ENCODE measurements at regions of chr11 and their contacts with region 1.

Region 1: GRCh38 chr11:95705485-95706124 is 84.0 kb downstream of the FAM76B start:
- DNase-seq: peak; percentile 65
- H3K4me3 ChIP-seq: no peak overlapping the region; a peak in 1 of 4 replicates
- H3K27ac ChIP-seq: no peak overlapping the region
- H3K4me1 ChIP-seq: peaks cover 0 to 7% of the 10 kb centered on the region in 2 experiments; a peak in 3 of 4 replicates
- H3K27me3 ChIP-seq: peaks cover 5% of the 10 kb centered on the region; the same call in 1 of the 2 replicates
- CTCF ChIP-seq: peak; percentile 94
- EP300 ChIP-seq: no peak
- RAD21 ChIP-seq: peak; percentile 99

Region 2: GRCh38 chr11:95067039-95067840 is 638.4 kb before region 1 on chr11:
- CTCF ChIA-PET with region 1: interaction called, 28 read pairs
- POLR2A ChIA-PET with region 1: no interaction called
- DNase-seq: peak; percentile 78
- H3K4me3 ChIP-seq: peak overlapping the region; percentile 90 to 98
- H3K27ac ChIP-seq: peak overlapping the region; percentile 79 to 96
- H3K4me1 ChIP-seq: peaks cover 7 to 8% of the 10 kb centered on the region in 2 experiments; a peak in 3 of 4 replicates
- H3K27me3 ChIP-seq: no peaks in the 10 kb centered on the region
- CTCF ChIP-seq: peak; percentile 50
- EP300 ChIP-seq: no peak
- RAD21 ChIP-seq: no peak

Region 3: DNA sequence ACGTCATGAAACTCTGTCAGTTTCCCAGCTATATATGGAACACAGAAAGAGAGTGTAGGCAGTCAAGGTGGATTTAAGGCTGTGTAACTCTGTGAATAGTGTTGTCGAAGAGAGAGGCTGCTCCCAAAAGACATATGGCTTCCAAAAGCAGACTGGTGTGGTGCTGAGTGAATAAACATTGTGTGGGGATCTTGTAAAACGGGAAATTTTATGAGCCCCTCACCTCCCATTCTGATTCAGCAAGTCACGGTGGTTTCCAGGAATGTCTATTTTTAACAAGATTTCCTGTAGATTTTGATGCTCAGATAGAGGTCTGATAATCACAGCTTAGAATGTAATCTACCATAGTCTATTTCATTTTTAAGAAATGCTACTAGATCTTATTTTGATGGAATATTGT is 542.5 kb before region 1 on chr11:
- CTCF ChIA-PET with region 1: interaction called, 159 read pairs
- POLR2A ChIA-PET with region 1: no interaction called
- DNase-seq: no peak
- H3K4me3 ChIP-seq: no peak overlapping the region
- H3K27ac ChIP-seq: no peak overlapping the region
- H3K4me1 ChIP-seq: no peaks in the 10 kb centered on the region
- H3K27me3 ChIP-seq: no peaks in the 10 kb centered on the region
- CTCF ChIP-seq: no peak
- EP300 ChIP-seq: no peak
- RAD21 ChIP-seq: no peak

Region 4: GRCh38 chr11:95680169-95680929 is 25.3 kb before region 1 on chr11:
- CTCF ChIA-PET with region 1: interaction called, 10 read pairs
- POLR2A ChIA-PET with region 1: no interaction called
- DNase-seq: no peak
- H3K4me3 ChIP-seq: no peak overlapping the region
- H3K27ac ChIP-seq: no peak overlapping the region
- H3K4me1 ChIP-seq: no peaks in the 10 kb centered on the region; a peak in 2 of 4 replicates
- H3K27me3 ChIP-seq: 0 out of 2 replicates have a peak, but pooled peaks cover 4% of the 10 kb centered on the region
- CTCF ChIP-seq: no peak
- EP300 ChIP-seq: no peak
- RAD21 ChIP-seq: no peak

Region 5: DNA sequence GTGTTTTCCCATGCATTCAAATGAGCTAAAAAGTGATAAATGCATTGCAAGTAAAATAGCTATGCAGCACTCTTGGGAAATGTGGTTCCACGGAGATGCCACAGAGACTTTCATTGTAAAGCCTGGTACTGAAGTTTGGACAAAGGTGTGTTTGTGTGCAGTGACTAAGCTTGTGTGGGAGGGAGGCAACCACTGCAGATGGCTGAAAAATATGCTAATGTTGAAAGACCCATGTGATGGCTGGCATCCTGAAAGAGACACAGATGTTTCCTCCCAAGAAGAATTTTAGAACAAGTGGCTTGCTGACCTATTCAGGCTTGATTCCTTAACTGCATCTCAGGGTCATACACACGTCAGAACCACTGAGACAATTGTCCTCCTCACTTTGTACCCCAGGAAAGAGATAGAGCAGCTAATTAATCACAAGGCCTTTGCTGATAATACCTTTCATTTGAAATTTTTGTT is 10.2 kb after region 1 on chr11:
- CTCF ChIA-PET with region 1: interaction called, 23 read pairs
- POLR2A ChIA-PET with region 1: no interaction called
- DNase-seq: no peak
- H3K4me3 ChIP-seq: no peak overlapping the region
- H3K27ac ChIP-seq: no peak overlapping the region
- H3K4me1 ChIP-seq: no peaks in the 10 kb centered on the region
- H3K27me3 ChIP-seq: no peaks in the 10 kb centered on the region
- CTCF ChIP-seq: no peak
- EP300 ChIP-seq: no peak
- RAD21 ChIP-seq: no peak

Region 6: GRCh38 chr11:95764267-95764898 is 58.8 kb after region 1 on chr11:
- CTCF ChIA-PET with region 1: interaction called, 11 read pairs
- POLR2A ChIA-PET with region 1: no interaction called
- DNase-seq: peak; percentile 42
- H3K4me3 ChIP-seq: no peak overlapping the region; a peak in 1 of 4 replicates
- H3K27ac ChIP-seq: no peak overlapping the region
- H3K4me1 ChIP-seq: no peaks in the 10 kb centered on the region
- H3K27me3 ChIP-seq: no peaks in the 10 kb centered on the region
- CTCF ChIP-seq: peak; percentile 79
- EP300 ChIP-seq: no peak
- RAD21 ChIP-seq: peak; percentile 89

Region 7: DNA sequence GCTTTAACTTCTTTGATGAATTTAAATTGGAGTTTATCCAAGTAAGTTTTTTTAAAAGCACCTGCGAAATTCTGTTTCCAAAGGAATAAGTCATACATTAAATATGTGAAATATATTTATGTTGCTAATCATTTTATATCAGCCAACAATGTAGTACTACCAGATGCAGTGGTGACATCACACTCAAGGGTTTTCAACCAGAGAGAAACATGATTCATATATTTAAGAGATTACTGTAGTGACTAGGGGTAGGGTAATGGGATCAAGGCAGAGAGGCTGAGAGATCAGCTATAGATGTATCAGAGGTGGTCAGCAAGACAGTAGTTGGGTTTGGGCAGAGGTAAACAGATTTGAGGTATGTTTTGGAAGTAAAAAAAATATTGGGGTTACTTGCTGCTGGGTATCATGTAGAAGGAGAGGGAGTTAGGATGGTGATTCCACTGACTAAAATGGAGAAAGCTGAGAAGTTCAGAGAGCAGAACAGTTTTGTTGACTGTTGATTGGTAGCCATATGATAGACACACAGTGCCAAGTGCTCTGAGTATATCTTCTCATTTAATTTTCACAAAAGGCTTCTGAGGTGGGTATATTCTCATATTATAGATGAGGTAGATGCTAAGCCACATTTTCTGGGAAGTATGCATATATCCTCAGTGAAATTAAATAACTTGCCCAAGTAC is 124.1 kb after region 1 on chr11:
- CTCF ChIA-PET with region 1: no interaction called
- POLR2A ChIA-PET with region 1: no interaction called
- DNase-seq: no peak
- H3K4me3 ChIP-seq: no peak overlapping the region
- H3K27ac ChIP-seq: peak overlapping the region; percentile 82 to 89; a peak in 3 of 4 replicates
- H3K4me1 ChIP-seq: peaks cover 0 to 6% of the 10 kb centered on the region in 2 experiments; a peak in 3 of 4 replicates
- H3K27me3 ChIP-seq: no peaks in the 10 kb centered on the region
- CTCF ChIP-seq: no peak
- EP300 ChIP-seq: peak in 1 of 2 experiments; percentile 22; a peak in 1 of 4 replicates
- RAD21 ChIP-seq: no peak